Mammary epithelial cell (primary cell): ENCODE measurements at regions of chr10 and their contacts with region 1.

Region 1: GRCh38 chr10:122089311-122090017 is 100.5 kb downstream of the TACC2 start:
- DNase-seq: peak; percentile 93
- H3K4me3 ChIP-seq: no peak overlapping the region
- H3K27ac ChIP-seq: peak overlapping the region; percentile 42
- H3K4me1 ChIP-seq: peaks cover 52% of the 10 kb centered on the region
- H3K27me3 ChIP-seq: no peaks in the 10 kb centered on the region
- CTCF ChIP-seq: peak; percentile 11 to 35

Region 2: GRCh38 chr10:122062831-122063674 is 26.4 kb before region 1 on chr10:
- CTCF ChIA-PET with region 1: no interaction called
- dilution Hi-C with region 1: no loop called
- in situ Hi-C with region 1: no loop called
- intact Hi-C with region 1: loop called (anchors 1 kb)
- DNase-seq: peak; percentile 96
- H3K4me3 ChIP-seq: no peak overlapping the region
- H3K27ac ChIP-seq: peak overlapping the region; percentile 76
- H3K4me1 ChIP-seq: peaks cover 10% of the 10 kb centered on the region
- H3K27me3 ChIP-seq: no peaks in the 10 kb centered on the region
- CTCF ChIP-seq: no peak

Region 3: GRCh38 chr10:122142641-122143237 is 53.3 kb after region 1 on chr10:
- CTCF ChIA-PET with region 1: no interaction called
- dilution Hi-C with region 1: loop called (anchors 5 kb)
- in situ Hi-C with region 1: no loop called
- intact Hi-C with region 1: no loop called
- DNase-seq: no peak
- H3K4me3 ChIP-seq: no peak overlapping the region
- H3K27ac ChIP-seq: no peak overlapping the region
- H3K4me1 ChIP-seq: peaks cover 39% of the 10 kb centered on the region
- H3K27me3 ChIP-seq: no peaks in the 10 kb centered on the region
- CTCF ChIP-seq: peak; percentile 75 to 91